Aorta (tissue), 5 donors: ENCODE measurements at regions of chr20 and their contacts with region 1.

Region 1: DNA sequence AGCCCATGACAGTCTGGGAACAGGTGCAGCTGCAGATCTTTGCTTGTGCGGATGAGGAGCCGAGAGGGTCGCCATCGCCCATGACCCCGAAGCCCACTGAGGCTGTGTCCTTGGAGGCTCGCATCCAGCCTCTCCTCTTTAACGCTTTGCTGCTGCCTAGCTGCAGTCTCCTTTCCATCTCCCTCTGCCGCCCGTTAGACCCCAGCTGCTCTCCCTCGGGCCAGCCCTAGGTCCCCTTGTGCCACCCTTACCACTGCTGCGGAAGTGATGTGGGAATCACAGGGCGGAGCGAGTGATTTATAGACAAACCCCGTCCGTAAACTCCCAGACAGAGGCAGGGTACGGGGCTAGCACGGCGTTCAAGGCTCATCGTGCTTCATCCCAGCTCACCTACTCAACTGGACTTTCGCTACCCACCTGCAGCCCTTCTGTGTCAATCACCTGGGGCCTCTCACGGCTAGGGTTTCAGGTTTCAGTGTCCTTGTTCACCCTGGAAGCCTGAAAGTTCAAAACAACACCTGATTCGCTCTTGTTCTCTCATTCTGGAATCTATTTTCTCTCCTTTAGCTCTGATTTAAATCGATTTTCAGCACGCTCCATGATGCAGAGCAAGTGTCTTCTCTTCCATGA is 76.1 kb downstream of the PAX1 start:
- DNase-seq: no peak
- ATAC-seq: no peak
- H3K4me3 ChIP-seq: no peak overlapping the region
- H3K27ac ChIP-seq: no peak overlapping the region
- H3K4me1 ChIP-seq: no peaks in the 10 kb centered on the region
- H3K27me3 ChIP-seq: peaks cover 0 to 4% of the 10 kb centered on the region in 2 donors

Region 2: GRCh38 chr20:21397341-21398108 is 384.0 kb before region 1 on chr20 and contains the start of gene NKX2-4:
- intact Hi-C with region 1: no loop called
- DNase-seq: no peak
- ATAC-seq: no peak
- H3K4me3 ChIP-seq: peak within 1 kb of the TSS; percentile 16
- H3K27ac ChIP-seq: no peak within 1 kb of the TSS
- H3K4me1 ChIP-seq: no peaks in the 10 kb centered on the region
- H3K27me3 ChIP-seq: no peaks in the 10 kb centered on the region
- total RNA-seq, gene NKX2-4: not detected

Region 3: DNA sequence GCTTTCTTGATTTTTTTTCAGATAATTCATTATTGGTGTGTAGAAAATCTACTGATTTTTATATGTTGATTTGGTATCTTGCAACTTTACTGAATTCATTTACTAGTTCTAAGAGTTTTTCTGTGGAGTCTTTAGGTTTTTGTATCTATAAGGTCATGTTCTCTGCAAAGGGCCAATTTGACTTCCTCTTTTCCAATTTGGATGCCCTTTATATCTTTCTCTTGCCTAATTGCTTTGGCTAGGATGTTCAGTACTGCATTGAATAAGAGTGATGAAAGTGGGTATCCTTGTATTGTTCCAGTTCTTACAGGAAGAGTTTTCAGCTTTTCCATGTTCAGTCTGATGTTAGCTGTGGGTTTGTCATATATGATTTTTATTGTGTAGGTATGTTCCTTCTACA is 369.8 kb before region 1 on chr20:
- intact Hi-C with region 1: no loop called
- DNase-seq: no peak
- ATAC-seq: no peak
- H3K4me3 ChIP-seq: no peak overlapping the region
- H3K27ac ChIP-seq: no peak overlapping the region
- H3K4me1 ChIP-seq: no peaks in the 10 kb centered on the region
- H3K27me3 ChIP-seq: no peaks in the 10 kb centered on the region

Region 4: GRCh38 chr20:21826976-21827375 is 45.4 kb after region 1 on chr20:
- intact Hi-C with region 1: no loop called
- DNase-seq: no peak
- ATAC-seq: no peak
- H3K4me3 ChIP-seq: no peak overlapping the region
- H3K27ac ChIP-seq: no peak overlapping the region
- H3K4me1 ChIP-seq: no peaks in the 10 kb centered on the region
- H3K27me3 ChIP-seq: no peaks in the 10 kb centered on the region

Region 5: DNA sequence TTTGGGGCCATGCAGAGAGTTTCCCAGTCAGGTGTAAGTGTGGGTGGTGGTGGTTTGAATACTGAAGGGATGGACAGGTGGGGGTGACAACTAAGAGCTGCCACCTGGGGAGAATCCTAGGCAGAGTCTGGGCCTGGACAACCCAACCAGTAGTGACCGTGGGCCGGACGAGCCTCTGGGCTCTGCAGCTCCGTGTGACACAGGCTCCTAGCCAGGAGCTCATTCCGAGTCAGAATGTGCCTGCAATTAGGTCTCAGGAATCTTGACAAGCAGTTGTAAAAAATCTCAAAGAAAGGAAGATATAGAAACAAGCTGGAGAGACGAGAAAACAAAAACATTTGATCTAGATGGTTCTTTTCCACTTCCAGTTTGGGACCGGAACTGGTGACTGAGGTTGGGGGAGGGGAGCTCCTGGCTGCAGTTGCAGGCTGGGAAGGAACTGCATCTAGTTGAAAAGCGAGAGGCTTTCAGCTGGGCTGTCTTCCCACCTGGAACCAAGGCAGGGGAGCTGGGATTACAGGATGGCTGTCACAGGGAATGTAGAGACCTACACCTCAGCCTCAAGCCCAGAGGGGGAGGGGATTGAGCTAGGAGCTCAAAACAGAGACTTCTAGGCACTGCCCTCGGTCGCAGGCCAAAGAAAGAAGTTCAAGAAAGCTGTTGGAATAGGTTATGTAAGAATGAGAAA is 80.8 kb after region 1 on chr20:
- intact Hi-C with region 1: no loop called
- DNase-seq: no peak
- ATAC-seq: peak; percentile 59
- H3K4me3 ChIP-seq: no peak overlapping the region
- H3K27ac ChIP-seq: no peak overlapping the region
- H3K4me1 ChIP-seq: no peaks in the 10 kb centered on the region
- H3K27me3 ChIP-seq: no peaks in the 10 kb centered on the region

Region 6: DNA sequence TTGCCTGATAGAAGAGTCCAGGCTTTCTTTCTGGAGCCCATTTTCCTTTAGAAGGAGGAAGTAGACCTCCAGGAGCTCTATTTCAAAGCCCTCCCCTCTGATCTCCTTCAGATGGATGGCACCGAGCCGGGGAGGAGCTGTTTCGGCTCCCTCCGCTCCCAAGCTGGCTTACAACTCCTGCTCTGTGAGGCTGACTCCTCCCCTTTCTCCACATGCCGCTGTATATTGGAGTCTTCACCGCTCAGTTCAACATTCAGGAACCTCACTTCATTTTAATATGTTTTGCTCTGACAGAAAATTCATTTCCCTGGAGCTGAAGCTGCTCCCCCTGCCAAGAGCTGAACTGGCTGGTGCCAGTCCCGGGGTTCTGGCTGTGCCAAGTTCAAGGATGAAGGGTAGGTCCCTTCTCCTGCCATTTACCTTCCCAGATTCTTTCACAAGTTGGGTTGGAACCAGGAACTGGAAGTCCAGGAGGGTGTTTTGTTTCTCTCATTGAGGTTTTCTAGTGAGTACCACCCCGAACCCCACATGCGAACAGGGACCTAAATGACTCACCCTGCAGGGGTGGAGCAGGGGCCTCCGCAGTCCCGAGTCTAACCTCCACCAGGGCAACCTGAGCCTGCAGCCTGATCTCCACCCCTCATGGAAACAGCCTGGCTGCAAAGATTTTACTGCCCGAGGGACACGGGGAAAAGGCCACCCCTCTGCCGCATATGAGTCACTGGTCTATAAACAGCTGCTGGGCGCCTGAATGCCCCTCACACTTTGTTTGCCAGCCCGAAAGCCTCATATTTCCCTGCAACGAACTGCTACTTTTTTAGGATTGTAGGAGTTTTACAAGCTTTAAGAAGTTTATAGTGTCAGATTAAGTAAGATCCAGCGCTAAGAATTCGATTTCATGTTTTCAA is 871.4 kb after region 1 on chr20:
- intact Hi-C with region 1: loop called in 1 of 2 experiments (anchors 10 kb)
- DNase-seq: no peak
- ATAC-seq: peak; percentile 62
- H3K4me3 ChIP-seq: no peak overlapping the region
- H3K27ac ChIP-seq: no peak overlapping the region
- H3K4me1 ChIP-seq: no peaks in the 10 kb centered on the region
- H3K27me3 ChIP-seq: no peaks in the 10 kb centered on the region